ENCODE measurements at regions of chr4 and their contacts with region 1.

Region 1: DNA sequence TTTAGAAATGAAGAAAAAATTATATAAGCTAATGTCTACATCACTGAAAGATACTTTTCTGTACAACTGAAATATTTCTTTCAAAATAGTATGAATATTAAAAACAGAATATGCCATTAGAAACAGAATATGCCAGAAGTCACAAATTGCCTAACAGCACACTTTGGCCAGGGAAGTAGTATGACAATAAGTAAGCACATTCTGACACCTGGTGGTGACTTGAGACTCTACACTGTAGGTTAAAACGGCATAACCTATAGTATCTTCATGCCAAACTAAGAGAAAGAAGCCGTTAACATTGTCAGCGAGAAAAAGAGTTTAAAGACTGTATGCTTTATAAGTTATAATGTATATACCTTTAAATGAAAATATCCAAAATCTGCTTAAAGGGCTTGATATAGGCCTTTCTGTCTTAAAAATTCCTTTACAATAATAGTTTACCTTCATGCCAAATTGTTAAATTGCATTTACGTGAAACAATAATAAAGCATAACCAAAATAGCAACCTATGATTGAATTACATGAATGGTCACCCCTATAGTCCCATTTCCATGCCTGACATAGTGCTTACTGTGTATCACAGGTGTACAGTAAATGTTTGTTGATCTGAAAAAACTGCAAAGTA is 32.8 kb downstream of the FAM13A start:
- DNase-seq: peak; percentile 78
- H3K4me3 ChIP-seq: no peak overlapping the region
- H3K27ac ChIP-seq: no peak overlapping the region
- H3K4me1 ChIP-seq: no peaks in the 10 kb centered on the region
- H3K27me3 ChIP-seq: no peaks in the 10 kb centered on the region
- CTCF ChIP-seq: peak; percentile 48 to 58
- POLR2A ChIP-seq: no peak

Region 2: DNA sequence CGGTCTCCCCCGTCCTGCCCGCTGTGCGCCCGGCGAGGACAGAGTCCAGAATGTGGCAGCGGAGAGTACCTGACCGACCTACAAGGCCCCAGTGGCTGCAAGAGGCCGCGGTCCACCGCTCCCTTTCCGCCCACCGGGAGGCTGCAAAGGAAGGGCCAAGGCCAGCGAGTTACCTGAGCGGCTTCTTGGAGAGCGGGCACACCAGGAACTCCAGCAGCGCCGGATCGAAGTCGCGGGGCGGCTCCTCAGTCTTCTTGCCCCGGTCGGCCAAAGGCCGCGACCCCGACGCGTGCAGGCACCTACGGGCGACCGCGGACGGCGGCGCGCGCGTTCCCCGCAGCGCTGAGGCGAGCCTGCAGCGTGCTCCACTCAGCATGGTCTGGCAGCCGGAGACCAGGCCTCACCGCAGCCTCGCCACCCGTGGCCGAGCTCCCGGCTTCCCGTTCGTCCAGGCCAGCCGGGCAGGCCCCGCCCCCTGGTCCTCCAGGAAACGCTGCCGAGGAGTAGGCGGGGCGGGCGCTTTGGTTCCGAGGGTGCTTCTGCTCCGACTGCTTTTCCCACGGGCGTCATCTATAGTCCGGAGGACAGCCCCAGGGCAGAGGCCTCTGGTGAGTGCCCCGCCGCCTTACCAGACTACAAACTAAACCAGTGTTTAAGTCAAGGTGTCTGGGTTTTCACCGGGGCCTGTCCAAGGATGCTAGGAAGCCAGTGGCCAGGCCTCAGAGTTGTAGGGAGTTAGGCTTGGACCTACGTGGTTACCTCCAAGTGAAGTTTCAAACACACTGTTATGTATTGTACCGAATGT is 500.6 kb before region 1 on chr4 and contains the start of gene PYURF:
- CTCF ChIA-PET with region 1: interaction called, 42 read pairs
- POLR2A ChIA-PET with region 1: no interaction called
- dilution Hi-C with region 1: no loop called
- intact Hi-C with region 1: no loop called
- DNase-seq: peak; percentile 95
- H3K4me3 ChIP-seq: peak within 1 kb of the TSS; percentile 91 to 93 (median 92)
- H3K27ac ChIP-seq: peak within 1 kb of the TSS; percentile 86
- H3K4me1 ChIP-seq: peaks cover 16% of the 10 kb centered on the region
- H3K27me3 ChIP-seq: no peaks in the 10 kb centered on the region
- CTCF ChIP-seq: no peak
- POLR2A ChIP-seq: peak; percentile 95
- total RNA-seq, gene PYURF: 79.7 and 81.8 TPM in 2 replicates

Region 3: DNA sequence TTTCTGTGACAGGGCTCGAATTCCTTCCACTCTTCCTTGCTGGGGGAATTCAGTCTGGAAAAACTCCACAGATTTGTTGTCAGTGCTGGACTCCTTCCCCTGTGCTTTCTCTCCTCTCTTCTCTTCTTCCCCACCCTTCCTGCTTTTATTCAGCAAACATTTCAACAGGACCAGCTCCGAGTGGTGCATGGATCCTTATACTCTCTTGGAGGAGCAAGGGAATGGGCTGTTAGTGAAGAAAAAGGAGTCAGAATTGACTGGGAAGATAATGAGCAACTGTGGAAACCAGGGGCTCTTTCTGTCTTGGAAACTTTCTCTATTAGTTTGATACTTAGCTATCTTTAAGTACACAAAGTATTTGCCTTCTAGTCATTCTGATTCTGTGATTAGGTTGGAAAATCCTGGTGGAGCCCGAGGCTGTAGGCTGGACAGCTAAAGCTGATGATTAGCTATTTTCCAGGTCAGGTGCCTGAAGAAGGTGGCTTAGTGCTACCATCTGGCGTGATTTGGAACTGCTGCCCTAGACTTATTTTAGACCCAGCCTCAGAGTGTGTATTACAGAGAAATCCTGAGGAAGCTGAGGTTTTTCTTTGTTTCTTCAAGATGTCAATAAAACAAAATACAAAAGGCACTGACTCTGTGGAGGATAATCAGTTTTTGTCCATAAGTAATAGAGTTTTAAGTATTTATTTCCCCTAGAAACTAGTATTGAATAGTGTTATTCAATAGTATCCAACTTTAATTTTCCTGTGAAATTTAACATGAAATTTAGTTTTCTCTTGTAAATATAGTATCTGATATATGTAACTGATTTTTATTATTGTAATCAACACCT is 364.9 kb before region 1 on chr4:
- CTCF ChIA-PET with region 1: interaction called, 11 read pairs
- POLR2A ChIA-PET with region 1: no interaction called
- dilution Hi-C with region 1: no loop called
- intact Hi-C with region 1: no loop called
- DNase-seq: peak; percentile 83
- H3K4me3 ChIP-seq: no peak overlapping the region
- H3K27ac ChIP-seq: no peak overlapping the region
- H3K4me1 ChIP-seq: peaks cover 20% of the 10 kb centered on the region
- H3K27me3 ChIP-seq: no peaks in the 10 kb centered on the region
- CTCF ChIP-seq: peak; percentile 77 to 80
- POLR2A ChIP-seq: no peak

Region 4: GRCh38 chr4:88706574-88706973 is 317.6 kb before region 1 on chr4:
- CTCF ChIA-PET with region 1: interaction called, 60 read pairs
- POLR2A ChIA-PET with region 1: interaction called, 3 read pairs
- dilution Hi-C with region 1: no loop called
- intact Hi-C with region 1: loop called (anchors 1 kb)
- DNase-seq: peak; percentile 67
- H3K4me3 ChIP-seq: no peak overlapping the region
- H3K27ac ChIP-seq: no peak overlapping the region
- H3K4me1 ChIP-seq: no peaks in the 10 kb centered on the region
- H3K27me3 ChIP-seq: no peaks in the 10 kb centered on the region
- CTCF ChIP-seq: peak; percentile 32 to 58
- POLR2A ChIP-seq: no peak

Region 5: GRCh38 chr4:88823058-88823919 is 200.9 kb before region 1 on chr4:
- CTCF ChIA-PET with region 1: interaction called, 357 read pairs
- POLR2A ChIA-PET with region 1: no interaction called
- dilution Hi-C with region 1: loop called (anchors 25 kb)
- intact Hi-C with region 1: loop called (anchors 1 kb)
- DNase-seq: peak; percentile 92
- H3K4me3 ChIP-seq: peak overlapping the region; percentile 12 to 61 (median 39)
- H3K27ac ChIP-seq: peak overlapping the region; percentile 81
- H3K4me1 ChIP-seq: peaks cover 17% of the 10 kb centered on the region
- H3K27me3 ChIP-seq: no peaks in the 10 kb centered on the region
- CTCF ChIP-seq: no peak
- POLR2A ChIP-seq: peak; percentile 64

Region 6: DNA sequence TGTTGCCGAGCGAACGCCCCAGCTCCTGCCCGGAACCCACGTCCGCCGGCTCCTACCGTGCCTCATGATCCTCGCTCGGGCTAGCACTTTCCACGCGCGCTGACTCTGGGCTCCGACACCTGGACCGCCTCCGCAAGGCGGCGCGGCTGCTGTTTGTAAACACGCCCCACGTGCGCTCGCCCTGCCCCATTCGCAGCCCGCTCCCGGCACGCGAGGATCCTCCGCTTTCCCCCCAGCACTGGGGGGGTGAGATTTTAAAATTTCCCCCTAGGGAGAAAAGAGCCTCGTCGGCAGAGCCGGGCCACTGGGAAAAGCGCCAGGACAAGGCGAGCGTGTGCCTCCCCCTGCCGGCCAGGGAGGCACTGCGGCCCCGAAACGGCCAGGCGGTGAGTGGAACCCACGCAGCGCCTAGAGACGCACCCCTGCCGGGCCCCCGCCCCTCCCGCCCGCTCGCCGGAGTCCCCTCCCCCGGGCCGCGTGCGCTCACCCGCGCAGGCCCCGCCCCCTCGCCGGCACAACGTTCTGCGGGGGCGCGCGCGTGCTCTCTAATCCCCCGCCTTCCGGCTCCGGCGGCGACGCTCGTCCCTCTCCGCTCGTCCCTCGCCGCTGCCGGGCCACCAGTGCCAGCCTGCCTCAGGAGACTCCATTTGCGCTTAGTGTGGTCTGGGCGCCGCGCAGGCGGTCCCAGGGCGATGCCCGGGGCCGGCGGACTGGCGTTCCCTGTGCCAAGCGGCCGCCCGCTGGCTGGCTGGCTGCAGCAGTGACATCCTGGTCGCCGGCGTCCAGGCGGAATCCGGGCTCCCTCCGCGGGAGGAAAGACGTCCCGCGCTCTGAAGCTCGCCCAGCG is 87.0 kb after region 1 on chr4 and contains the start of gene TIGD2:
- CTCF ChIA-PET with region 1: interaction called, 4 read pairs
- POLR2A ChIA-PET with region 1: no interaction called
- dilution Hi-C with region 1: no loop called
- intact Hi-C with region 1: loop called (anchors 2 kb)
- DNase-seq: peak; percentile 84
- H3K4me3 ChIP-seq: peak within 1 kb of the TSS; percentile 58 to 82 (median 59)
- H3K27ac ChIP-seq: peak within 1 kb of the TSS; percentile 40
- H3K4me1 ChIP-seq: peaks cover 13% of the 10 kb centered on the region
- H3K27me3 ChIP-seq: peaks cover 12 to 15% of the 10 kb centered on the region in 2 experiments
- CTCF ChIP-seq: peak; percentile 64 to 85
- POLR2A ChIP-seq: peak; percentile 73
- total RNA-seq, gene TIGD2: 4.2 and 5.0 TPM in 2 replicates

Region 7: DNA sequence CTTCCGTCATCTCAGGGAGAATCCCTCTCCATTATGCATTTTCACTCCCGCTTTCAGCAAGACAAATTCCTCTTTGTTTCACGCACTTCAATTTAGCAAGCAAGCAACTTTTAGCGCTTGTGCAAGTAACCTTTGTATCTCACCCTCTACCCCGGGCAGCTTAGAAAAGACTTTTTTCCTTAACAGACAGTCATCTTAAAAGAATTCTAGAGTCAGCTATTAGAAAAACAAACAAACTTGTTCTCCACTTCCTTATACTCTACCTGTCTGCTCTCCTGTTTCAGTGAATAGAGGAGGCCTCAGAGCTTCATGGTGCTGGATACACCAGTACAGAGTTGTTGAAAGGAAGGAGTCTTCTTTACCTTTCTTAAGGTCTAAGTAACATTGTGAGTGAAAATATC is 99.3 kb after region 1 on chr4:
- CTCF ChIA-PET with region 1: no interaction called
- POLR2A ChIA-PET with region 1: no interaction called
- dilution Hi-C with region 1: no loop called
- intact Hi-C with region 1: no loop called
- DNase-seq: no peak
- H3K4me3 ChIP-seq: no peak overlapping the region
- H3K27ac ChIP-seq: no peak overlapping the region
- H3K4me1 ChIP-seq: no peaks in the 10 kb centered on the region
- H3K27me3 ChIP-seq: peaks cover 0 to 2% of the 10 kb centered on the region in 2 experiments
- CTCF ChIP-seq: no peak
- POLR2A ChIP-seq: no peak

Measured in endothelial cell of umbilical vein (primary cell).